ENCODE measurements at regions of chr14 and their contacts with region 1.

Region 1: GRCh38 chr14:75654127-75654732 is 6.4 kb downstream of the ERG28 start:
- DNase-seq: peak; percentile 60 to 80 (median 74)
- H3K4me3 ChIP-seq: no peak overlapping the region
- H3K4me3 Mint-ChIP-seq: no peak overlapping the region
- H3K27ac ChIP-seq: no peak overlapping the region
- H3K27ac Mint-ChIP-seq: no peak overlapping the region
- H3K4me1 ChIP-seq: no peaks in the 10 kb centered on the region
- H3K4me1 Mint-ChIP-seq: peaks cover 6% of the 10 kb centered on the region
- H3K27me3 ChIP-seq: no peaks in the 10 kb centered on the region
- H3K27me3 Mint-ChIP-seq: no peaks in the 10 kb centered on the region
- CTCF ChIP-seq: peak; percentile 91

Region 2: DNA sequence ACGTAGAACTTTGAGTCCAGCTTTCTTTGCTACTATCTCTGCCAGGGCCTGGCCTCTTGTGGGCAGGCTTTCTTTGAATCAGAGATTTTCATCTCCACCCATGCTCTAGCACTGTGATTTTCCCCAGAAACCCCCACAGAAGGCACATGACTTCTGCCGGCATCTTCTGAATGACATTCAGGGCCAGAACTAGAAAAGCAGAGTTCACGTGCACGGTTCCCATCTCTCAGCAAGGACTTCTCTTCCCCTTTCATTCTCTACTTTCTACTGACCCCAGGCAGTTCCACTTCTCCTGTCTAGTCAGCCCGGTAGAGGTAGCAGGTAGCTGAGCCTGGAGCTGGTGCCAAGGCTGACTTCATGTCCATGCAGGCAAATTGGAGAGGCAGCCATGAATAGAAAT is 105.1 kb before region 1 on chr14:
- intact Hi-C with region 1: no loop called
- DNase-seq: peak in 1 of 3 donors; percentile 50
- H3K4me3 ChIP-seq: no peak overlapping the region
- H3K4me3 Mint-ChIP-seq: no peak overlapping the region
- H3K27ac ChIP-seq: peak overlapping the region in 1 of 2 donors; percentile 41
- H3K27ac Mint-ChIP-seq: peak overlapping the region in 2 of 7 donors; percentile 57 to 79
- H3K4me1 ChIP-seq: peaks cover 0 to 6% of the 10 kb centered on the region in 2 donors
- H3K4me1 Mint-ChIP-seq: peaks cover 19% of the 10 kb centered on the region
- H3K27me3 ChIP-seq: no peaks in the 10 kb centered on the region
- H3K27me3 Mint-ChIP-seq: peaks cover 0 to 2% (median under 1%) of the 10 kb centered on the region in 3 donors
- CTCF ChIP-seq: no peak

Region 3: GRCh38 chr14:75615200-75615599 is 39.0 kb before region 1 on chr14:
- intact Hi-C with region 1: loop called (anchors 5 kb)
- DNase-seq: peak; percentile 94 to 98 (median 98)
- H3K4me3 ChIP-seq: peak overlapping the region in 1 of 3 experiments; percentile 38
- H3K4me3 Mint-ChIP-seq: peak overlapping the region in 1 of 2 donors; percentile 84
- H3K27ac ChIP-seq: peak overlapping the region; percentile 96 to 100
- H3K27ac Mint-ChIP-seq: peak overlapping the region; percentile 98 to 99 (median 99)
- H3K4me1 ChIP-seq: peaks cover 62 to 65% of the 10 kb centered on the region in 2 donors
- H3K4me1 Mint-ChIP-seq: peaks cover 59% of the 10 kb centered on the region
- H3K27me3 ChIP-seq: no peaks in the 10 kb centered on the region
- H3K27me3 Mint-ChIP-seq: peaks cover 0 to 13% (median 1%) of the 10 kb centered on the region in 3 donors
- CTCF ChIP-seq: no peak

Region 4: DNA sequence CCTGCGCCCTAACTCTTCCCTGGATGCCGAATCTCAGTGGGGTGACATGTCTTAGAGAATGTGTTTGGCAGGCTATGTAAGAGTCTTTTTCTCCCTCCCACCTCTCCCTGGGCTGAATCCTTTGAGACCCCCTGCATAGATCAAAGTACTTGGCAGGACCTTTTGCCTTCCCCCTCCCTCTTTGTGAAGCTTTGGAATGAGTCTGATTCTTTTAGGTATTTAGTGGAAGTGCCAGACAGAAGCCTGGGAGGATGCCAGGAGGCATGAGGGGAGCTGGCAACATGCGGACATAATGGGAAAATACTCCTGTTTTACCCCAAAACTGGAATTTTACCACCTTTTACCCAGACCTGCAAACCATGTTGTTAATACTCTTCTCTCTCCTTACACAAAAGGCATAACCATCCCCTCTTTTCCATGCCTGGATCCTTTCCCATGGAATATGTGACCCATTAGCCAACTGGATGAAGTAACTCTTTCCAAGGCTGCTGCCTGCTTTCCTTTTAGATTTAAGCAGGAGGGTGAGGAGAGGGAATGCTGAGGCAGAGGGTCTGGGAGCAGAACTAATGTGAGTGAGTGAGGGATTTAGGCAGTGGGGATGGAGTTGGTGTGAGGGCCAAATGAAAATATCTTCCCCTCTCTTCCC is 48.5 kb after region 1 on chr14:
- intact Hi-C with region 1: no loop called
- DNase-seq: no peak
- H3K4me3 ChIP-seq: no peak overlapping the region
- H3K4me3 Mint-ChIP-seq: no peak overlapping the region
- H3K27ac ChIP-seq: no peak overlapping the region
- H3K27ac Mint-ChIP-seq: no peak overlapping the region
- H3K4me1 ChIP-seq: peaks cover 7 to 11% of the 10 kb centered on the region in 2 donors
- H3K4me1 Mint-ChIP-seq: peaks cover 16% of the 10 kb centered on the region
- H3K27me3 ChIP-seq: no peaks in the 10 kb centered on the region
- H3K27me3 Mint-ChIP-seq: no peaks in the 10 kb centered on the region
- CTCF ChIP-seq: no peak